Activated CD4-positive, alpha-beta memory T cell treated with anti-CD3 and anti-CD28 coated beads for 36 hours (primary cell): ENCODE measurements at regions of chr5 and their contacts with region 1.

Region 1: GRCh38 chr5:172833686-172834414 is at the start of gene ERGIC1:
- DNase-seq: peak; percentile 82
- H3K4me3 Mint-ChIP-seq: peak within 1 kb of the TSS; percentile 83
- H3K27ac Mint-ChIP-seq: peak within 1 kb of the TSS; percentile 81
- H3K4me1 Mint-ChIP-seq: peaks cover 41% of the 10 kb centered on the region
- H3K27me3 Mint-ChIP-seq: no peaks in the 10 kb centered on the region
- total RNA-seq, gene ERGIC1: 41.9 to 42.7 TPM

Region 2: DNA sequence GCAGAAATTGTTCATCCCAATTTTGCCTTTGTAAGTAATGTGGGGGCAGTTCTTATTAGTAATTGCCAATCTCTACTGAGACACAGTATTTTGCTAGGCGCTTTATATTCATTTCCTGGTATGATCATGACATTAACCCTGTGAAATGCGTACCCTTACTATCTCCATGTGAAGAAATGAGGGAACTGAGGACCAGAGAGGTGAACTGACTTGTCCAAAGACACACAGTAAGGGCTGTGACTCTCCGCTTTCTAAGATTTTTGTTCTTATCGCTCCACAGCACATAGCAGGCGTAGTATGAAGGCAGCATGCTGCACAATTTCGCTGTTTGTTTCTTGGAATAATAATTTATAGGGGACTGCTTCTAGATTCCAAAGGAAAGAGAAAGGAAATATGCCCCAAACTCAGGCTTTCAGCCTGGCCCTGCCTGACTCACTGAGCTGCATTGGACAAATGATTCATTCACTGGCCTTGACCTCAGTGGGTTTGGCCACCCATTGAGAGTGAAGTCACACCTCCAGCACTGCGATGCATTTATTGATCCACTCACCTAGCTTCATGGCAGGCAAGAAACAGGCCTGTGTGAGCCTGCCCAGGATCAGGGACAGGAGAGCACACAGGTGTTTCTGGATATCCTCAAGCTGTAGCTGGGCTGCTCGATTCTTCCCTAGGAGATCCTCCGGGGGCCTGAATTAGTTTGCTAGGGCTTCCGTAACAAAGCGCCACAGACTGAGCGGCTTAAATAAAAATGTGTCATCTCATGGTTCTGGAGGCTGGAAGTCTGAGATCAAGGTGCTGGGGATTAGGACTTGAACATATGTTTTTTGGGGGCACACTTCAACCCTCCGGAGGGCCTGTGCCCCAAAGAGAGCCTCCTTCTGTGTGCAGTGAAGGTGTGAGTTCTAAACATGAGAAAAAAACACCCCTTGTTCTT is 55.7 kb before region 1 on chr5:
- CTCF ChIA-PET with region 1: interaction called, 12 read pairs
- POLR2A ChIA-PET with region 1: interaction called, 5 read pairs
- intact Hi-C with region 1: loop called (anchors 1 kb)
- DNase-seq: peak; percentile 47
- H3K4me3 Mint-ChIP-seq: peak overlapping the region; percentile 38
- H3K27ac Mint-ChIP-seq: peak overlapping the region; percentile 87
- H3K4me1 Mint-ChIP-seq: peaks cover 61% of the 10 kb centered on the region
- H3K27me3 Mint-ChIP-seq: no peaks in the 10 kb centered on the region

Region 3: GRCh38 chr5:172806897-172807672 is 26.8 kb before region 1 on chr5:
- CTCF ChIA-PET with region 1: no interaction called
- POLR2A ChIA-PET with region 1: no interaction called
- intact Hi-C with region 1: loop called (anchors 1 kb)
- DNase-seq: peak; percentile 98
- H3K4me3 Mint-ChIP-seq: peak overlapping the region; percentile 29
- H3K27ac Mint-ChIP-seq: peak overlapping the region; percentile 84
- H3K4me1 Mint-ChIP-seq: peaks cover 17% of the 10 kb centered on the region
- H3K27me3 Mint-ChIP-seq: no peaks in the 10 kb centered on the region